HepG2 (cell line): ENCODE measurements at regions of chr13 and their contacts with region 1.

Region 1: DNA sequence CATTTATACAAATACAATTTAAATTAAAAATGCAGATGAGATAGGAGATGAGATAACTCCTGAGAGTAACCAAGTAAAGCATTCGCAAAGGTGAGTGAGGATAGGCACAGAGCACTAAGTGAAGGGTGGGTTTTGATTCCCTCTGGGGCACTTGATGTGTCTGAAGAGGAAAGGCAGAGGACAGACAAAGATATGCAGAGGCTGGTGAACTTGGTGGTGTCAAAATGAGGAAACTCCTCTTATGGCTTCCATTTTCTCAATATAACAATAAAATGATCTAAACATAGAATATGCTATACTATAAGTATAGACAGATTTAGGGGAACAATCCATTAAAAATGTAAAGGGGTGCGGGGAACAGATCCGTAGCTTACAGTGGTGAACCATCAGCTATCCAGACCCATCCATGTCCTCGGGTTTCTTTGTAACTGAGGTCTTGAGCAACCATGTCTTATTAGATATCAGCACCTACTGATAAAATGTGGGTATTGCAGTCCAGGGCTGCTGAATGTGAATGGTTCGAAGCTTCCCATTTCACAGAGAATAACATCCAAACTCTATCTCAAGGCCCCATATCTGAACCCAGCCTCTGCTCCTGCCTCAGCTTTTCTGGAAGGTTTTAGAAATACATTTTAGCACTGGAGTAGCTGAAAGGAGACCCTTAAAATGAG is 73.9 kb upstream of the SLC10A2 start:
- DNase-seq: peak; percentile 12
- ATAC-seq: peak; percentile 86
- H3K4me3 ChIP-seq: no peak overlapping the region
- H3K27ac ChIP-seq: no peak overlapping the region
- H3K4me1 ChIP-seq: no peaks in the 10 kb centered on the region
- H3K27me3 ChIP-seq: no peaks in the 10 kb centered on the region; a peak in 1 of 5 replicates
- CTCF ChIP-seq: peak; percentile 54
- EP300 ChIP-seq: no peak
- POLR2A ChIP-seq: no peak
- RAD21 ChIP-seq: no peak

Region 2: DNA sequence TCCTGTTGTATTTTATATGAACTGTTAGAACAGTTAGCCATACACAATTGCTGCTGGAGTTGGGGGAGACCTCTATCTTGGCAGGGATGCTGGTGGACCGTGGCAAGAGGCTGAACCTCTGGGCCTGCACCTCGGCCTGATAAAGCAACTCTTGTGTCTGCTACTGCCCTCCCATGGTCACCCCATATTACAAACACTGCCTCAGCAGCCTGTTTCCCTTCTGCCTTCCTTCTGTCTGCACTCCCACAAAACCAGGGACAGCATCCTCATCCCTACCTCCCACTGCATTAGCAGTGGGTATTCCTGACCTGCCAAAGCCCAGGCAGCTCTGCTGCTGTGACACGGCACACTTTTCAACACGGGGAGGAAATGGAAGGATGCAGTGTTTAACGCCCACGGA is 1194.7 kb before region 1 on chr13:
- CTCF ChIA-PET with region 1: no interaction called
- POLR2A ChIA-PET with region 1: no interaction called
- in situ Hi-C with region 1: no loop called
- intact Hi-C with region 1: no loop called
- DNase-seq: no peak
- ATAC-seq: peak; percentile 70
- H3K4me3 ChIP-seq: no peak overlapping the region
- H3K27ac ChIP-seq: no peak overlapping the region
- H3K4me1 ChIP-seq: no peaks in the 10 kb centered on the region
- H3K27me3 ChIP-seq: no peaks in the 10 kb centered on the region
- CTCF ChIP-seq: peak; percentile 20; the same call in 1 of the 2 replicates
- EP300 ChIP-seq: no peak
- POLR2A ChIP-seq: no peak
- RAD21 ChIP-seq: no peak

Region 3: DNA sequence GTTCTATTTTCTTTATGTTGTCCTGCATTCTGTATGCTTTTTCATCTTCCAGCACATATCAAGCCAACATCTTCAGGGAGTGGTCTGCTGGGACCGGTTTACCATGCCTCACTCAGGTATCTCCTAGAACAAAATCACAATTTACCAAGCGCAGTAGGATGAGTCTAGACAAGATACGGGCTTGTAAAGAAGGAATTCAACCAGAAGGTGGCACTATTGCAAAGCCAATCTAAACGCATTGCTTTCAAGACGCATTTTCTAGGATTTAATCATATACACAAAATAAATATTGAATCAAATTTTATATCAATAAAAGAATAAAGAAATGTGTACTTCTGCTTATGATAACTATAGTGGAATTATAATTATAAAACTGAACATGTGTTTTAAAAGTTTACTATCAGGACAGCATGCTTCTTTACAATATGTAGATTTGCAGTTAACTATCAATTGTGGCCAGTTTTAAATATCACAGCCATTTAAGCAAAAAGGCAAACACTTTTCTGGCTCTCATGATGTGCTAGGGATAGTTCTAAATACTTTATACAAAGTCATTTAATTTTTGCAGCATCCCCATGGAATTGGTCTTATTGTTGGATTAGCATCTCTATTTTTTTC is 559.5 kb before region 1 on chr13:
- CTCF ChIA-PET with region 1: no interaction called
- POLR2A ChIA-PET with region 1: no interaction called
- in situ Hi-C with region 1: no loop called
- intact Hi-C with region 1: loop called (anchors 5 kb)
- DNase-seq: peak; percentile 55
- ATAC-seq: peak; percentile 87
- H3K4me3 ChIP-seq: no peak overlapping the region
- H3K27ac ChIP-seq: no peak overlapping the region
- H3K4me1 ChIP-seq: no peaks in the 10 kb centered on the region
- H3K27me3 ChIP-seq: peaks cover 0 to 14% of the 10 kb centered on the region in 2 experiments; a peak in 4 of 5 replicates
- CTCF ChIP-seq: peak; percentile 78
- EP300 ChIP-seq: no peak
- POLR2A ChIP-seq: no peak
- RAD21 ChIP-seq: peak; percentile 55

Region 4: DNA sequence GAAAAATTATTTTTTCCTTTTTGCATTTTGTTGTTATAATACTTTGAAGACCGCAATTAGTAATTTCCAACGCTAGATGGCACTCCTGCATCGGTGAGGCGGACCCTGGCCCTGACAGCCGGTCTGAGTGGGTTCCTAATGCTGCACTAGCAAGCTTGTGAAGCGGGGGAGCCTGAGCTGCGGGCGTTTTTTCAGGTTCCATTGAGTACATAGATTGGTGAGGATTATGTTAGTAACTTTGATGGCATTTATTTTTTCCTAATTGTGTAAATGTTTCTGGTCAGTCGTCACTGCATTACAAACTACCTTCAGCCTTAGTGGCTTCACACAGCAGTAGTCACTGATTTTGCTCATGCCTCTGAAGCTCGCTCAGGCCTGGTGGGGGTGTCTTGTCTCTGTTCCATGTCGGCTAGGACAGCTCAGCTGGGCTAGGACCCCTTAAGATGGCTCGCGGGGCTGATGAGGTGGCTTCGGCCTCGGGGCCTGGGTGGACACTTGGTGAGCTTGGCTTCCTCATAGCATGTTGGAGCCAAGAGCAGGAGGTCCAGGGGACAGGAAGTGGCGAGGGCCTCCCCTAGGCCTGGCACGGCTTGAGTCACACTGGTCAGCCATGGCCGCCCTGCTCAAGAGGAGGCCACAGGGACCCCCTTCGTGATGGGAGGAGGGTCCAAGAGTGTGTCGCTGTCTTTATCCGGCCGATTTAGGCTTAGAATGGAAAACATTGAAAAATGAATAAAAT is 269.3 kb before region 1 on chr13:
- CTCF ChIA-PET with region 1: no interaction called
- POLR2A ChIA-PET with region 1: no interaction called
- in situ Hi-C with region 1: no loop called
- intact Hi-C with region 1: loop called (anchors 1 kb)
- DNase-seq: peak; percentile 39
- ATAC-seq: peak; percentile 94
- H3K4me3 ChIP-seq: no peak overlapping the region
- H3K27ac ChIP-seq: no peak overlapping the region
- H3K4me1 ChIP-seq: no peaks in the 10 kb centered on the region
- H3K27me3 ChIP-seq: no peaks in the 10 kb centered on the region
- CTCF ChIP-seq: peak; percentile 81
- EP300 ChIP-seq: no peak
- POLR2A ChIP-seq: no peak
- RAD21 ChIP-seq: peak; percentile 66

Region 5: DNA sequence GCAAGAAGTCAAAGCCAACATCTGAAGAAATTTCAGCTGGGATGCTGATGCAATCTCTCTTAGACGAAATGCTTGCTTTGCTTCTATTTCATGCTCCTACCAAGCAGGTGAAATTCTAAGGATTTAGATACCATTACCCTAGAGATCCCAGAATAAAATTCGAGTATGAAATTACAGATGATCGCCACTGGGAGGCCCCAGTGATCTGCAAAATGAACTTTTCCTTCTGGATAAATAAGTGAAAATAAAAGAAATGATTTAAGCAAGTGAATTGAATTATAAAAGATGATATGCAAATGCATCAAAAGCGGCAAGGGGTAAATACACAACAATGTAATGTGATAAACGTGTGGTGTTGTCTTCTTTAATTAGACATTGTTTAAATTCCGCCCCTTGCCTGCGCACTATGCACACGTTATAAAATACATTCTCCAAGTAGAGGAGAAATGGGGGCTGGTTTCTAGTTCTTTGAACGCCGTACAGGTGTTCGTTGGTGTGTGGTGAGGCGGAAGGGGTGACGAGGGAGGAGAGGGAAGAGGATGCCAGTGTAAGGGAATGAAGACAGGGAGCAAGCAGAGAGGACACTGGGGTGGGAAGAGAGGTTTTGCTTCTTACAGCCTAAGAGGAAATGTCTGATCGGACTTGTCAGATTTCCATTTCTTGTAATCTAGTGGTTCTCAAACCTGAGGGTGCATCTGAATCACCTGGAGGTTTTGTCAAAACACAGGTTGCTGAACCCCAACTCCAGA is 236.3 kb before region 1 on chr13:
- CTCF ChIA-PET with region 1: no interaction called
- POLR2A ChIA-PET with region 1: no interaction called
- in situ Hi-C with region 1: loop called (anchors 25 kb)
- intact Hi-C with region 1: no loop called
- DNase-seq: no peak
- ATAC-seq: peak; percentile 46
- H3K4me3 ChIP-seq: no peak overlapping the region
- H3K27ac ChIP-seq: no peak overlapping the region
- H3K4me1 ChIP-seq: peaks cover 55% of the 10 kb centered on the region
- H3K27me3 ChIP-seq: no peaks in the 10 kb centered on the region
- CTCF ChIP-seq: no peak
- EP300 ChIP-seq: no peak
- POLR2A ChIP-seq: no peak
- RAD21 ChIP-seq: no peak

Region 6: GRCh38 chr13:102947745-102948405 is 192.3 kb before region 1 on chr13:
- CTCF ChIA-PET with region 1: no interaction called
- POLR2A ChIA-PET with region 1: no interaction called
- in situ Hi-C with region 1: no loop called
- intact Hi-C with region 1: no loop called
- DNase-seq: no peak
- ATAC-seq: no peak
- H3K4me3 ChIP-seq: no peak overlapping the region
- H3K27ac ChIP-seq: no peak overlapping the region
- H3K4me1 ChIP-seq: peaks cover 15% of the 10 kb centered on the region
- H3K27me3 ChIP-seq: no peaks in the 10 kb centered on the region; a peak in 1 of 5 replicates
- CTCF ChIP-seq: no peak
- EP300 ChIP-seq: no peak
- POLR2A ChIP-seq: no peak
- RAD21 ChIP-seq: no peak

Region 7: DNA sequence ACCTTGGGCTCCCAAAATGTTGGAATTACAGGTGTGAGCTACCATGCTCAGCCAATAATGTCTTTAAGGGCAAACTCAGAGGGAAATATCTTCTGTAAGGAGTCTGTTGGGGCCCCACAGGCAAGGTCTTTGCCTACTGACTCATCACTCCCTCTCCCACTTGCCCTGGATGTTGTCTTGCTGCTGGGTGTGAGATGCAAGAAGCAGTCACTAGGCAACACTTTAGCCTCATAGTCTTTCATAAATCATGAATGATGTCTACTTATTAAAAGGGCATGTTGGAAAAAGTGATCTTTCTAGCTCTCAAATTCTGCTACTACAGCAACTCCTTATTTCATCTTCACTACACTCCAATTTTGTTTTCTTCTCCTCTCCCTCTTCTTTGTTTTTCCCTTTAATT is 39.3 kb before region 1 on chr13:
- CTCF ChIA-PET with region 1: no interaction called
- POLR2A ChIA-PET with region 1: no interaction called
- in situ Hi-C with region 1: no loop called
- intact Hi-C with region 1: no loop called
- DNase-seq: no peak
- ATAC-seq: no peak
- H3K4me3 ChIP-seq: no peak overlapping the region
- H3K27ac ChIP-seq: no peak overlapping the region
- H3K4me1 ChIP-seq: no peaks in the 10 kb centered on the region
- H3K27me3 ChIP-seq: no peaks in the 10 kb centered on the region
- CTCF ChIP-seq: no peak
- EP300 ChIP-seq: no peak
- POLR2A ChIP-seq: no peak
- RAD21 ChIP-seq: no peak